ENCODE measurements at regions of chr11 and their contacts with region 1.

Region 1: GRCh38 chr11:62383822-62384221 is 35.0 kb upstream of the SCGB1A1 start:
- ATAC-seq: no peak
- H3K4me3 ChIP-seq: no peak overlapping the region
- H3K27ac ChIP-seq: no peak overlapping the region
- H3K4me1 ChIP-seq: peaks cover 30 to 39% of the 10 kb centered on the region in 2 donors

Region 2: GRCh38 chr11:62694455-62695167 is 310.8 kb after region 1 on chr11:
- in situ Hi-C with region 1: loop called in 1 of 9 experiments (anchors 10 kb)
- ATAC-seq: peak; percentile 48 to 96 (median 67)
- H3K4me3 ChIP-seq: no peak overlapping the region
- H3K27ac ChIP-seq: no peak overlapping the region
- H3K4me1 ChIP-seq: no peaks in the 10 kb centered on the region

Measured in motor neuron (in vitro differentiated cells).